ENCODE measurements at regions of chr11 and their contacts with region 1.

Region 1: GRCh38 chr11:76734456-76735420 is 48.4 kb upstream of the TSKU start:
- DNase-seq: no peak
- H3K4me3 ChIP-seq: no peak overlapping the region
- CTCF ChIP-seq: no peak
- POLR2A ChIP-seq: no peak

Region 2: GRCh38 chr11:74860743-74861142 is 1874.0 kb before region 1 on chr11:
- intact Hi-C with region 1: no loop called
- DNase-seq: no peak
- H3K4me3 ChIP-seq: no peak overlapping the region
- CTCF ChIP-seq: no peak
- POLR2A ChIP-seq: no peak

Region 3: GRCh38 chr11:76025068-76025467 is 709.7 kb before region 1 on chr11:
- intact Hi-C with region 1: no loop called
- DNase-seq: no peak
- H3K4me3 ChIP-seq: no peak overlapping the region
- CTCF ChIP-seq: no peak
- POLR2A ChIP-seq: no peak

Region 4: GRCh38 chr11:76799066-76799804 is 64.5 kb after region 1 on chr11:
- intact Hi-C with region 1: loop called (anchors 5 kb)
- DNase-seq: peak; percentile 74 to 98
- H3K4me3 ChIP-seq: no peak overlapping the region
- CTCF ChIP-seq: peak in 1 of 3 donors; percentile 88
- POLR2A ChIP-seq: no peak